Motor neuron (in vitro differentiated cells): ENCODE measurements at regions of chr1 and their contacts with region 1.

Region 1: DNA sequence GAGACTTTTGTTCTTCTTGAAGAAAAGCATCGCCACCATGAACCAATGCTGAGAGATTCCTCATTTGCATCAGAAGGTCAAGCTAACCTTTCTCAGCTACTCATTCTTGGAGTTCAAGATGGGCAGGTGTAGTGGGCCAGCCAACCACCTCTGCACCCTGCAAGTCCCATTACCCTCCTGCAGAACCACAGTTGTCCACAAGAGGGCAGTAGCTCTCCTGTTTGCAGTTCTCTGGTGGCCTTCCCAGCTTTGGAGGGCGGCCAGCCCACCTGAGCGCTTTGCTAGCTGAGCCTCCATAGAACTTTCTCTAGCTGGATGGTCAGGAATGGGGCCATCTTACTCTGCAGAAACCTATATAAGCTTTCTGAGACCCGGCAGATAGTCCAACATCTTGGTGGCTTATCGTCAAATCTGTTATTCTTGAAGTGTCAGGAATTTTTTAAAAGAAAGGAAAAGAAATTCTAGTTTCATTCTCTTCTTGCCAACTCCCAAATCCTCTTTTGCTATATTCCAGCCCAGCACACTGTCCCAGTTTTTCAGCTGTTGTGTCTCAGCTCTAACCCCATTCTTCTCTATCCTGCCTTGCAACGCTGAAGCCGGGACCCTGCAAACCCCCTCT is 11.0 kb upstream of the LMX1A start:
- ATAC-seq: peak in 3 of 8 experiments; percentile 53 to 62 (median 57)
- H3K4me3 ChIP-seq: no peak overlapping the region
- H3K27ac ChIP-seq: no peak overlapping the region
- H3K4me1 ChIP-seq: no peaks in the 10 kb centered on the region

Region 2: GRCh38 chr1:165129568-165130164 is 237.8 kb before region 1 on chr1:
- in situ Hi-C with region 1: loop called in 8 of 9 experiments (anchors 10 to 25 kb)
- ATAC-seq: peak; percentile 86 to 98 (median 92)
- H3K4me3 ChIP-seq: no peak overlapping the region
- H3K27ac ChIP-seq: no peak overlapping the region
- H3K4me1 ChIP-seq: peaks cover 12 to 13% of the 10 kb centered on the region in 2 donors

Region 3: DNA sequence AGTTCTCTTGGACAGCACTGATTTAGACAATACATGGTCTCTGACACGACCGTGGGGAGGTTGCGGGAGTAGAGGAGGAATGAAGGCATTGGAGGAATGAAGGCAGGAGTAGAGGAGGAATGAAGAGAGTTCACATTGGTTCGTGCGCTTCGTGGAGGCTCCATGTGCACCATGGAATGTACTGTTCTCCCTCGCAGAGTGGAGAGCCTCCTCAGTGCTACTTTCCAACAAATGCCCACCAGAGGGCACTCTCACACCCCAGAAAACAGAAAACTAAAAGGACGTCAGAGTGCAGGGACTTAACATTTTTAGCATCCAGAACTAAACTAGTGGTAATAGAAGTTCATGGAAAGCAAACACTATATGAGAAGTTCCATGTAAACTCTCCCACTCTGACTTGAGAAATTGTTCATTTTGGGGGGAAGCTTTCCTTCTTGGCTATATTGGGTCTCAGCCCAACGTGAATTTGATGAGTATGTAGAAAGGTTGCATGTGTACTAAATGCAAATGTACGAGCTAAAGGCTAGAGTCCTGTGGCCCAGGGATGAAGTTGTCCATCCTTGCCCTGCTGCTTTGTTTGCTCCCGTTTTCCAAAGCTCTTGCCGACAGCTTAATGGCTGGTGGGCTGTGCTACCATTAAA is 222.6 kb before region 1 on chr1:
- in situ Hi-C with region 1: loop called in 7 of 9 experiments (anchors 25 kb)
- ATAC-seq: peak; percentile 83 to 100 (median 90)
- H3K4me3 ChIP-seq: no peak overlapping the region
- H3K27ac ChIP-seq: no peak overlapping the region
- H3K4me1 ChIP-seq: no peaks in the 10 kb centered on the region

Region 4: DNA sequence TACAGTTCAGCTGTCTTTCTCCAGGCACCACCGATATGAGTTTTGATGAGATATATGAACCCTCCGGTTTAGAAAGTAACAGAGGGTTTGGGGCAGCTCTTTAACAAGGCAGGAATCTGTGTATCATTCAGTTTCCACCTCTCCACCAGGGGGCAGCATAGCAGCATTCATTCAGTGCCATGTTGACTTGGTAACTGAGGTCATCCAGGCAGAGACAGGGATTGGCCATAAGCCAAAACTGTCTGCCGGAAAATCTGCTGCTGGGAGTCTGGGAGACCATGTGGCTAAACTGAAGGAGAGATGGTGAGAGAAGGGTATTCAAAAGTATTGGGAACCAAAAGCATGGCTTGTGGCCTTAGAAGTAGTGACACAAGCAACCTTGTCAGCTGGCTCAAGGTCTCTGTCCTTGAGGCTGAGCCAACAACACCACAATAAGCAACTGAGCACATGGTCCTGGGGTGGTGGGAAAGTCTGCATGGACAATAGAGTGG is 109.5 kb before region 1 on chr1:
- in situ Hi-C with region 1: loop called in 1 of 9 experiments (anchors 25 kb)
- ATAC-seq: peak in 6 of 8 experiments; percentile 55 to 97 (median 90)
- H3K4me3 ChIP-seq: no peak overlapping the region
- H3K27ac ChIP-seq: no peak overlapping the region
- H3K4me1 ChIP-seq: peaks cover 4 to 6% of the 10 kb centered on the region in 2 donors

Region 5: GRCh38 chr1:165298203-165298820 is 69.2 kb before region 1 on chr1:
- in situ Hi-C with region 1: no loop called
- ATAC-seq: peak in 2 of 8 experiments; percentile 36 to 76
- H3K4me3 ChIP-seq: no peak overlapping the region
- H3K27ac ChIP-seq: no peak overlapping the region
- H3K4me1 ChIP-seq: peaks cover 0 to 2% of the 10 kb centered on the region in 2 donors